Activated CD4-positive, alpha-beta memory T cell treated with anti-CD3 and anti-CD28 coated beads for 36 hours (primary cell): ENCODE measurements at regions of chr11 and their contacts with region 1.

Region 1: DNA sequence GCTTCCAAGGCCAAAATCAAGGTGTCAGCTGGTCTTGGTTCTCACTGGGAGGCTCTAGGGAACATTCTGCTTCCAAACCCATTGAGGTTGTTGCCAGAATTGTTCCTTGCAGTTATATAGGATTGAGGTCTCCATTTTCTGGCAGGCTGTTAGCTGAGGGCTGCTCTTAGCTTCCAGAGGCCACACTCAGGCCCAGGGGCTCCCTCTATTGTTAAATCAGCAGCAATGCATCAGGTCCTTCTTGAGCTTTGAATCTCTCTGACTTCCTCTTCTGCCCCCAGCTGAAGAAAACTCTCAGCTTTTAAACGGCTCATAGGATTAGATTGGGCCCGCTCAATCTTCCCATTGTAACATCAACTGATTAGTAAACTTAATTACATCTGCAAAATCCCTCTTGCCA is 39.3 kb upstream of the BSX start:
- DNase-seq: peak; percentile 34
- H3K4me3 Mint-ChIP-seq: no peak overlapping the region
- H3K27ac Mint-ChIP-seq: no peak overlapping the region
- H3K4me1 Mint-ChIP-seq: peaks cover 5% of the 10 kb centered on the region
- H3K27me3 Mint-ChIP-seq: peaks cover 3% of the 10 kb centered on the region

Region 2: DNA sequence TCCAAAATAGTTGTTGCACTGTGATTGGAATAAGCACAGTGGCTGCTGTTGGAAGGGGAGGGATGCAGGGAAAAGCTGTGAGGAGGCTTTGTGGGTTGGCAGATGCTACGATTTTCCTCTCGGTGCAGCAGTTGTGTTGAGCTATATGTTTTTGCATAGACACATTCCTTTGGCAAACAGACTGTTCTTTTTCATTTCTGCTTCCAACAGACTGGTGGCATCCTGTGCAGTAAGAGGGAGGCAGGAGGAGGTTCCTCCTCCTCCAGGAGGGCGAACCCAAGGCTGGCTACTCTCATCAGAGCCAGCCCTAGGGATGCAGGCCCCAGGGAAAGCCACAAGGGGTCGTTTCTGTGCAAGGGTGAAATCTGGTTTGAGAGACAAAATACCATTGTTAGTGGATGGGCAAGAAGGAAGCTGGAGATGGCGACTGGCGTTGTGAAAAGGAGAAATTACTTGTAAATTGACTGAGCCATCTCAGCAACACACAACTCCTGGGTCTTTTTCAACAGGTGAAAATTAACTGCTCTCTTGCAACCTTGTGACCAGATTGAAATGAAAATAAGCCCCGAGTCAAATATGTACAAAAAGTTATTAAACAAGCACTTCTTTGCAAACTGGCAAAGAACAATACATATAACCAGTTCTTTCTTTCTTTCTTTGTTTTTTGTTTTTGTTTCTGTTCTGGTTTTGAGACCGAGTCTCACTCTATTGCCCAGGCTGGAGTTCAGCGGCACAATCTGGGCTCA is 392.0 kb before region 1 on chr11:
- CTCF ChIA-PET with region 1: no interaction called
- POLR2A ChIA-PET with region 1: no interaction called
- intact Hi-C with region 1: loop called (anchors 10 kb)
- DNase-seq: peak; percentile 79
- H3K4me3 Mint-ChIP-seq: no peak overlapping the region
- H3K27ac Mint-ChIP-seq: no peak overlapping the region
- H3K4me1 Mint-ChIP-seq: peaks cover 6% of the 10 kb centered on the region
- H3K27me3 Mint-ChIP-seq: peaks cover 1% of the 10 kb centered on the region

Region 3: DNA sequence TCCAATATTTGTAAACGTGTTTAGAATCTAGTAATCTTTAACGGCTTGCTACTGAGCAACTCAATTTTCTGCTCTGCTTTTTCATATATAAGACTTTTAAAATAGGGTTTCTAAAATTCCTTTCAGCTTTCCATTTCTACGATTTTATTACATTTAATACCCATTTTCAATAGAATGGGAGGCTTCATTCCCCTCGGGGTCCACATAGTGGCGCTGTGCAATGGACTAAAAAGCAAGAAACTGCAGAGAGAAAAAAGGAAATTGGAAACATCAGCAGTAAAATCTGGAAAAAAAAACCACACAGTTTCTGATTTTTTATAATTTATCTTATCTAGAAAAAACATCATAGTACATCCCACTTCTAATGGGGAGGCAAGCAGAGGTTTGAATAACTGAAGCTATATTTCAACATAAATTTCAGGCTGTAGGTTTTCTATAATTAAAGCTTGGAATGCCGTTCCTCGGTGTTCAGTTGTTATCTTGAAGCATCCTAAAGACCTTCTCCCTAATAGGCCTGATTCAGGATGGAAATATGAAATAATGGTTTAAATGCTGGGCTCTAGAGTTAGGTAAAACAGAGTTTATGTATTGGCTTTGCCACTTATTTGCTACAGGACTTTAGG is 157.2 kb before region 1 on chr11:
- CTCF ChIA-PET with region 1: interaction called, 372 read pairs
- POLR2A ChIA-PET with region 1: no interaction called
- intact Hi-C with region 1: loop called (anchors 1 kb)
- DNase-seq: peak; percentile 63
- H3K4me3 Mint-ChIP-seq: no peak overlapping the region
- H3K27ac Mint-ChIP-seq: no peak overlapping the region
- H3K4me1 Mint-ChIP-seq: no peaks in the 10 kb centered on the region
- H3K27me3 Mint-ChIP-seq: peaks cover 27% of the 10 kb centered on the region

Region 4: DNA sequence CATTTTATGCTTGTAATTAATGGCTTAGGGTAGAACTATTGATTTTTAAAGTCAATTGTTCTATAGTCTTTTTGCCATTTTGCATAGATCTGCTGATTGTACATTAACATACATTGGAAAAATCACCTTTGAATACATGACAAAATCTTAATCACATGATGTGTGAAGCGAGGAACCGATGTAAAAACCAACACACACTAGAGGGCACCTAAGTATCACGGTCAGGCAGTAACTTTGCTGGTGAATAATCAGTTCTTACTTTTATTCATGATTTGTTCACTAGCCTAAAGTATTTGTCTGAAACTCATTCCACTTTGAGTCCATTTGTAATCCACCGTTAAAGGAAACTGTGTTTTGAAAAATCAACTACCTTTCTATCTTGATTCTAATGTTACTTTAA is 110.2 kb before region 1 on chr11:
- CTCF ChIA-PET with region 1: interaction called, 19 read pairs
- POLR2A ChIA-PET with region 1: no interaction called
- intact Hi-C with region 1: loop called (anchors 1 kb)
- DNase-seq: peak; percentile 17
- H3K4me3 Mint-ChIP-seq: no peak overlapping the region
- H3K27ac Mint-ChIP-seq: no peak overlapping the region
- H3K4me1 Mint-ChIP-seq: no peaks in the 10 kb centered on the region
- H3K27me3 Mint-ChIP-seq: no peaks in the 10 kb centered on the region

Region 5: DNA sequence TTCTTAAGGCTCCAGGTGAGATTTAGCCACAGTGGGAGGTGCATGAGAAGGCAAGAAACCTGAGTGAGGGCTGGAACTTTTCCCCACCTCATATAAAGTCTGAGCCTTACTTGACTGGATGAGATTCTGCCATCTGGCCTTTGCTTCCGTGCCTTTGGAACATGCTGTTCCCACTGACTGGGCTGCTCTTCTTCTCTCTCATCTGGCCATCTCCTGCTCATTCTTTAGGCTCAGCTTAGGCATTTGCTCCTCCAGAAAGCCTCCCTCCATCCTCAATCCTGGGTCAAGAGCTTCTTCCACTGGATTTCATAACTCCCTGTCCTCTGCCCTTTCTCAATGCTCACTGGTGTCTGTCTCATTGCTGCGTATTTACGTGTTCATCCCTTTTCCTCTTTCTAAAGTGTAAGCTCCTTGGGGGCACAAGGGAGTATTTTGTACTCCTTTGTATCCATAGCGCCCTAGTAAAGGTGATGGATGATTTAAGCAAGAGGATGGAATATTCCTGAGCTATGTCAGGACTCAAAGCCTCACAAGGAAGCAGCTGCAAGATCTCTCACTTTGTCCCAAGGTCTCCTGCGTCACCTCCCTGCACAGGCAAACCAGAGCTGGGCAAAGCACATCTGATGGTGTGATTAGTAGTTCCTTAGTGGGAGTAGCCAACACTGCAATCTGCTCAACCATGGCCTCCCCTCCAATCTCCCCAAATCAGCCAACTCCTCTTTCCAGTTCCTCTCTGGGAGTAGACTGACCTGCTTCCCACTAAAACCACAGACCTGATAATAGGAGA is 25.7 kb after region 1 on chr11:
- CTCF ChIA-PET with region 1: interaction called, 20 read pairs
- POLR2A ChIA-PET with region 1: no interaction called
- intact Hi-C with region 1: no loop called
- DNase-seq: no peak
- H3K4me3 Mint-ChIP-seq: no peak overlapping the region
- H3K27ac Mint-ChIP-seq: no peak overlapping the region
- H3K4me1 Mint-ChIP-seq: no peaks in the 10 kb centered on the region
- H3K27me3 Mint-ChIP-seq: no peaks in the 10 kb centered on the region

Region 6: DNA sequence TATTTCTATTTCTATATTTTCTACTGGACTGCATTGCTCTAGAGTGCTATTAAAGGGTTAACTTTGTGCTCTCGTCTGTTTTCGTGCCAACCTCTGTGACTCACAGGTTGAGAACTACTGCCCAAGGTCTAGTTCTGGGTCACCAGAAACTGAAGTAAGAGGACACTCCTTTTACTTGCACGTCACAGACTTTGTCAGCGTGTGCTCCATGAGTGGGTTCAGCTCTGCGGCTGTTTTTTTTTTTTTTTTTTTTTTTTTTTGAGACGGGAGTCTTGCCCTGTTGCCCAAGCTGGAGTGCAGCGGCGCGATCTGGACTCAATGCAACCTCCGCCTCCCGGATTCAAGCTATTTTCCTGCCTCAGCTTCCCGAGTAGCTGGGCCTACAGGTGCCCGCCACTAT is 124.3 kb after region 1 on chr11:
- CTCF ChIA-PET with region 1: no interaction called
- POLR2A ChIA-PET with region 1: no interaction called
- intact Hi-C with region 1: no loop called
- DNase-seq: no peak
- H3K4me3 Mint-ChIP-seq: no peak overlapping the region
- H3K27ac Mint-ChIP-seq: no peak overlapping the region
- H3K4me1 Mint-ChIP-seq: no peaks in the 10 kb centered on the region
- H3K27me3 Mint-ChIP-seq: peaks cover 4% of the 10 kb centered on the region